Activated CD8-positive, alpha-beta T cell treated with anti-CD3 and anti-CD28 coated beads for 36 hours (primary cell): ENCODE measurements at regions of chr12 and their contacts with region 1.

Region 1: GRCh38 chr12:546921-547845 is 87.4 kb downstream of the B4GALNT3 start:
- DNase-seq: peak; percentile 66
- ATAC-seq: peak; percentile 86
- H3K4me3 Mint-ChIP-seq: no peak overlapping the region
- H3K27ac Mint-ChIP-seq: no peak overlapping the region
- H3K4me1 Mint-ChIP-seq: peaks cover 19% of the 10 kb centered on the region
- H3K27me3 Mint-ChIP-seq: peaks cover 8% of the 10 kb centered on the region
- CTCF ChIP-seq: peak; percentile 97

Region 2: GRCh38 chr12:442235-442884 is 104.8 kb before region 1 on chr12:
- CTCF ChIA-PET with region 1: interaction called, 16 read pairs
- POLR2A ChIA-PET with region 1: no interaction called
- intact Hi-C with region 1: no loop called
- DNase-seq: peak; percentile 63
- ATAC-seq: peak; percentile 30
- H3K4me3 Mint-ChIP-seq: no peak overlapping the region
- H3K27ac Mint-ChIP-seq: no peak overlapping the region
- H3K4me1 Mint-ChIP-seq: no peaks in the 10 kb centered on the region
- H3K27me3 Mint-ChIP-seq: peaks cover 2% of the 10 kb centered on the region
- CTCF ChIP-seq: peak; percentile 96

Region 3: DNA sequence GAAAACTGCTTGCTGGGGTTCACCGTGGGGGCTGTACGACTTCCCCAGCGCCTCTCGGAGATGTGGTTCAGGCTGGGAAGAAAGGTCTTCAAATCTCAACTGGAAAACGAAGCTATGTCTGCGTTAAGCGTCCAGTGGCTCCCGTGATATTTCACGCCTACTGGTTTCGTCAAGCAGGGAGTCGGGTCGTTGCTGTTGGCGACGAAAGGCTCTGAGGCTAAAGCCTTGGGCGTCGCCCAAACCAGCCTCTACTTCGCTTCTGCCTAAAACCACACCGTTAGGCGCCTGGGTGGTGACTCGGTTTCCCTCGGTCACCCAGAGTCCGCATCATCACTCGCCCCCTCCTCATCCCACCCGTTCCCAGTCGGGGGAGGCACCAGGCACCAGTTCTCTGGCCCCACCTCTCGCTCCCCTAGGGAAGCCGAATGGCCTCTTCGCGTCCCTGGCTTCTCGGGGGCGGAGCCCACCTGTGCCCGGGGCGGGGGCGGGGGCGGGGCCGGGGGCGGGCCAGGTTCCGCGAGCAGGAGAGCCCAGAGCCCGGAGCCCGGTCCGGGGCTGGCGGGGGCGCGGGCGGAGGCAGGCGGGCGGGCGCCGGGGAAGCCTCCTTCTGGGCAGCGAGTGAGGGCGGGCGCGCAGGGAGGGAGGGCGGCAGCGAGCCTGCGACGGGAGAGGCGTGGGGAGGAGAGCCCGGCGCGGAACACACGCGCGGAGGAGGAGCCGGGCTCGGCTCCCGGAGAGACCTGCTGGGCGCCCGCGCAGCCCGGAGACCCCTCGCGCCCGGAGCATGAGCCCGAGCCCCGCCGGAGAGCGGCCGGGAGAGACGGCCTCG is 87.5 kb before region 1 on chr12 and contains the start of gene B4GALNT3:
- CTCF ChIA-PET with region 1: interaction called, 154 read pairs
- POLR2A ChIA-PET with region 1: no interaction called
- intact Hi-C with region 1: loop called (anchors 5 kb)
- DNase-seq: peak; percentile 35
- ATAC-seq: peak; percentile 60
- H3K4me3 Mint-ChIP-seq: peak within 1 kb of the TSS; percentile 65
- H3K27ac Mint-ChIP-seq: no peak within 1 kb of the TSS
- H3K4me1 Mint-ChIP-seq: peaks cover 16% of the 10 kb centered on the region
- H3K27me3 Mint-ChIP-seq: peaks cover 38% of the 10 kb centered on the region
- CTCF ChIP-seq: no peak
- total RNA-seq, gene B4GALNT3: 2.8 to 3.4 TPM

Region 4: DNA sequence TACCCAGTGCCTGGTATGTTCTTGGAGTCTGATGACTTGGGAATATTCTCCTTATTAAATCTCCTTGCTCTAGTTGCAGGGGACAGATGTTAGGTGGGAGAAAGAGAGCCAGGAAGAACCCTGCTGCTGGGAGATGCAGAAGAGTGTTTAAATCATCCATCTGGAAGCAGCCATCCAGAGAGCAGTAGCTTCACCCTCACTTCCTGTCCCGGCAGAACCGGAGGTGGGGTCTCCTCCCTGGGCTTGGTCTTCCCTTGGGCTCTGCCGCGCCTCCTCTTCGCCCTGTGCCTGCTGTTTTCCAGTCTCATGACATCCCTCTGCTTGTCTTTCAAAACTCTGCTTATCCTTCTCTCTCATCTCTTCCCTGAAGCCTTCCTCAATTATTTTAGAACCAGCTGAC is 71.9 kb before region 1 on chr12:
- CTCF ChIA-PET with region 1: interaction called, 13 read pairs
- POLR2A ChIA-PET with region 1: no interaction called
- intact Hi-C with region 1: no loop called
- DNase-seq: no peak
- ATAC-seq: no peak
- H3K4me3 Mint-ChIP-seq: no peak overlapping the region
- H3K27ac Mint-ChIP-seq: no peak overlapping the region
- H3K4me1 Mint-ChIP-seq: no peaks in the 10 kb centered on the region
- H3K27me3 Mint-ChIP-seq: peaks cover 13% of the 10 kb centered on the region
- CTCF ChIP-seq: no peak

Region 5: GRCh38 chr12:480831-481816 is 66.1 kb before region 1 on chr12:
- CTCF ChIA-PET with region 1: interaction called, 16 read pairs
- POLR2A ChIA-PET with region 1: no interaction called
- intact Hi-C with region 1: no loop called
- DNase-seq: no peak
- ATAC-seq: no peak
- H3K4me3 Mint-ChIP-seq: no peak overlapping the region
- H3K27ac Mint-ChIP-seq: no peak overlapping the region
- H3K4me1 Mint-ChIP-seq: no peaks in the 10 kb centered on the region
- H3K27me3 Mint-ChIP-seq: peaks cover 17% of the 10 kb centered on the region
- CTCF ChIP-seq: no peak